Gastrocnemius medialis (tissue), 4 donors: ENCODE measurements at regions of chr9 and their contacts with region 1.

Region 1: GRCh38 chr9:89797937-89798491 is 193.2 kb downstream of the GADD45G start:
- DNase-seq: no peak
- ATAC-seq: no peak
- H3K4me3 ChIP-seq: no peak overlapping the region
- H3K27ac ChIP-seq: no peak overlapping the region
- H3K4me1 ChIP-seq: peaks cover 0 to 2% of the 10 kb centered on the region in 2 donors
- H3K27me3 ChIP-seq: no peaks in the 10 kb centered on the region
- CTCF ChIP-seq: no peak
- POLR2A ChIP-seq: no peak

Region 2: DNA sequence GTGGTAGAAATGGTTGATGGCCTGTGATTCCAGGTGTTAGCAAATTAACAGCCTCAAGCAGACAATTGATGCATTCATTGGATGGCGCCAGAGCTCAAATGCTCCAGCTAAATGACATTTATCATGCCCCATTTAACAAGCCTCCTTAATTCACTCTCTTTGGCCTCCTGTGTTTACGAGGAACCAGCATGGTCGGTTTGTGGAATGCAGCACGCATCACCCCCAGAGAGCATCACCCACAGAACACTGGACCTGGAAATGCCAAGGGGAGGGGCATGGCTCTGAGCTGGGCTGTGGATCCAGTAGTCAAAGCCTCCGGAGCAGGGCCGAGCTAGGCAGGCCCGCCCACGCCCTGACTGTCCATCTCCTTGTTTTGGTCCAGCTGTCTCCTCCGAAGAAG is 240.7 kb after region 1 on chr9:
- in situ Hi-C with region 1: no loop called
- intact Hi-C with region 1: loop called (anchors 10 kb)
- DNase-seq: no peak
- ATAC-seq: no peak
- H3K4me3 ChIP-seq: no peak overlapping the region
- H3K27ac ChIP-seq: no peak overlapping the region
- H3K4me1 ChIP-seq: no peaks in the 10 kb centered on the region
- H3K27me3 ChIP-seq: no peaks in the 10 kb centered on the region
- CTCF ChIP-seq: no peak
- POLR2A ChIP-seq: no peak